Activated CD8-positive, alpha-beta memory T cell treated with anti-CD3 and anti-CD28 coated beads, Interleukin-2, amount 10 ng/mL, durations not matched to agents 7 days and 5 days (primary cell): ENCODE measurements at regions of chr14 and their contacts with region 1.

Region 1: GRCh38 chr14:49862089-49862673 is 9.6 kb upstream of the NEMF start:
- DNase-seq: peak; percentile 93
- ATAC-seq: peak; percentile 10
- H3K4me3 Mint-ChIP-seq: no peak overlapping the region
- H3K27ac Mint-ChIP-seq: no peak overlapping the region
- H3K4me1 Mint-ChIP-seq: peaks cover 32% of the 10 kb centered on the region
- H3K27me3 Mint-ChIP-seq: no peaks in the 10 kb centered on the region

Region 2: DNA sequence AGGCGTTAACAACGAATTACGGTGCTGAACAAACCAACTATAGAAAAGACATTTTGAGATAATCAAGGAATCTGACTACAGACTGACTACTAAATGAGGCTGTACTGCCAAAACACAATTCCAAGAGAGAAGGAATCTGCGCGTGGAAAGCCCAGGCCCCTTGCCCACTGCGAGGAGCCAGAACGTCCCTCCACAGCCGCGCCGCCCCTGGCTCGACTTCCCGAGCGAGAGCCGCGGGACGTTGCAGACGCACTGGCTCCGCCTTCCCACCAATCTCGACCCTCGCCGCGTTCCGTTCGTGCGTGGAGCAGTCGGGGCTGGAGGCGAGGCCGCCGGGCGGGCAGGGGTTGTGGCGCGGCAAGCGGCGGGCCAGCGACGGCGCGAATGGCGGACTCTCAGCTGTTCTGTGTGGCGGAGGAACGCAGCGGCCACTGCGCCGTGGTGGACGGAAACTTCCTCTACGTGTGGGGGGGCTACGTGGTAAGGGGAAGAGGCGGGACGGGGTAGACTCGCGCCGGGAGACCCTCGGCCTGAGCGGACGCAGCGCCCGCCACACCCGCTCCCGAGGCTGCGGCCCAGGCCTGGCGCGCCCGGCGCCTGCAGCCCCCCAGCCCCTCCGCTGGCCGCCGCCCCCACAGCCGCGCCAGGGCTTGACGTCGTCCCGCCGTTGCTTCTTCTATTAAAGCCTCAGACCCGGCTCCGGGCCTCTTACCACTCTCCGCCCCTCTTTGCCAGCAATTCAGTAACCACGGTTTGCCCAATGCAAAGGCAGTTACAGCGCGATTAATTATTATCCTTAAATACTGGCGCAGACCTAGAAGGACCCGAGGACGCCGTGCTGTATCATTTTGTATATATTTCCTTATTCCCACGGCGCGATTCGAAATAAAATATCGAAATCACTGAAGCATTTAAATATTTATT is 169.1 kb before region 1 on chr14 and contains the start of gene KLHDC1:
- CTCF ChIA-PET with region 1: no interaction called
- DNase-seq: peak; percentile 83
- ATAC-seq: peak; percentile 77
- H3K4me3 Mint-ChIP-seq: peak within 1 kb of the TSS; percentile 74
- H3K27ac Mint-ChIP-seq: peak within 1 kb of the TSS; percentile 78
- H3K4me1 Mint-ChIP-seq: peaks cover 22% of the 10 kb centered on the region
- H3K27me3 Mint-ChIP-seq: no peaks in the 10 kb centered on the region
- total RNA-seq, gene KLHDC1: 1.1 to 1.9 TPM

Region 3: DNA sequence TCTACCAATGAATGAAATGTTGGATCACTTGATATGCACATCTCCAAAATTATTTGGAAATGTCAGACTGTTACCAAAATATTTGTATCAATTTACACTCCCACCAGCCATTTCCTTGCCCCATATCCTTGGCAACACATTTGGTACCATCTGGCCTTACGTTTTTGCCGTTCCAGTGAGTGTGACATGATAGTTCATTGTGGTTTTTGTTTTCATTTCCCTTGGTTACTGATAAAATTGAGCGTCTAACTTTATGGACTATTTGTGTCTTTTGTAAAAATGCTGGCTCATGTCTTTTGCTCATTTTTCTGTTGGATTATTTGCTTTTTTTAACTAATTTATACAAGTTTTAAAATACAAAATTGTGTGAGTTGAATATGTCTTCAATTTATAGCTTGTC is 158.2 kb before region 1 on chr14:
- CTCF ChIA-PET with region 1: no interaction called
- DNase-seq: no peak
- ATAC-seq: no peak
- H3K4me3 Mint-ChIP-seq: no peak overlapping the region
- H3K27ac Mint-ChIP-seq: no peak overlapping the region
- H3K4me1 Mint-ChIP-seq: peaks cover 7% of the 10 kb centered on the region
- H3K27me3 Mint-ChIP-seq: no peaks in the 10 kb centered on the region

Region 4: DNA sequence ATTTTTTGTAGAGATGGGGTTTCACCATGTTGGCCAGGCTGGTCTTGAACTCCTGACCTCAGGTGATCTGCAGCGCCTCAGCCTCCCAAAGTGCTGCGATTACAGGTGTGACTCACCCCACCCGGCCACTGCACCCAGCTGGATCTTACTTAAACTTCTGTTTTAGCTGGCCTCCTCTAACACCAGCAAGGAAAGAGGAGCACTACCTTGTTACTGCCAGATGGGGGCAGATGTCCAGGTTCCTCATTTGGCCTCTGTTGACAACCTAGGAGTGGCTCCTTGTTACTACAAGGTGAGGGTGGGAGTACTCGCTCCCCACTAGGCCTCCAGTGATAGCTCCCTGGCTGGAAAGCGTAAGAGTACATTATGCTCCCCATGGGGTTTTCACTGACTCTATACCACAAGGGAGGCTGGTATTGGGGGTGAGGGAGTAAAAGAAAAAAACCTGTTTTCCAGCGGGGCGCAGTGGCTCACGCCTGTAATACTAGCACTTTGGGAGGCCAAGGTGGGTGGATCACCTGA is 17.6 kb after region 1 on chr14:
- CTCF ChIA-PET with region 1: interaction called, 20 read pairs
- DNase-seq: peak; percentile 83
- ATAC-seq: peak; percentile 96
- H3K4me3 Mint-ChIP-seq: no peak overlapping the region
- H3K27ac Mint-ChIP-seq: peak overlapping the region; percentile 52
- H3K4me1 Mint-ChIP-seq: peaks cover 24% of the 10 kb centered on the region
- H3K27me3 Mint-ChIP-seq: no peaks in the 10 kb centered on the region

Region 5: GRCh38 chr14:49892636-49893308 is 30.6 kb after region 1 on chr14 and contains the start of gene ARF6:
- CTCF ChIA-PET with region 1: interaction called, 27 read pairs
- DNase-seq: peak; percentile 99
- ATAC-seq: peak; percentile 91
- H3K4me3 Mint-ChIP-seq: peak within 1 kb of the TSS; percentile 94
- H3K27ac Mint-ChIP-seq: peak within 1 kb of the TSS; percentile 99
- H3K4me1 Mint-ChIP-seq: peaks cover 18% of the 10 kb centered on the region
- H3K27me3 Mint-ChIP-seq: no peaks in the 10 kb centered on the region
- total RNA-seq, gene ARF6: 171 to 190 TPM

Region 6: DNA sequence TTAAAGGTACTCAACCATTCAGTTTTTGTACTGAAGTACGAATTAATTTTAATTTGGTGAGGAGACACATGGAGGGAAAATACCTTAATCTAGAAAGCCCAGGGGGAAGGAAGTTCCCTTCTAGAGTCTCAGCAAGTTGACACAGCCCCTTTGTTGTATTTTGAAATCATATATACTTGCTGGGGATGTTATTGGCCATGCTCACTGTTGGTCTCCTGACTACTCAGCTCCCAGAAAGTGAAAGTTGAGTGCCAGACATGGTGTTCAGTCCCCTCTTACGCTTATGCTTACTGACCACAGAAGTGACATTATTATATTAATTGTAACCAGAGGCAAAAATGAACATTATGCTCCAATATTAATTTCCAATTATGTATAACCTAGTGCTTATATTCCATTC is 58.8 kb after region 1 on chr14:
- CTCF ChIA-PET with region 1: no interaction called
- DNase-seq: no peak
- ATAC-seq: no peak
- H3K4me3 Mint-ChIP-seq: no peak overlapping the region
- H3K27ac Mint-ChIP-seq: no peak overlapping the region
- H3K4me1 Mint-ChIP-seq: peaks cover 7% of the 10 kb centered on the region
- H3K27me3 Mint-ChIP-seq: no peaks in the 10 kb centered on the region

Region 7: DNA sequence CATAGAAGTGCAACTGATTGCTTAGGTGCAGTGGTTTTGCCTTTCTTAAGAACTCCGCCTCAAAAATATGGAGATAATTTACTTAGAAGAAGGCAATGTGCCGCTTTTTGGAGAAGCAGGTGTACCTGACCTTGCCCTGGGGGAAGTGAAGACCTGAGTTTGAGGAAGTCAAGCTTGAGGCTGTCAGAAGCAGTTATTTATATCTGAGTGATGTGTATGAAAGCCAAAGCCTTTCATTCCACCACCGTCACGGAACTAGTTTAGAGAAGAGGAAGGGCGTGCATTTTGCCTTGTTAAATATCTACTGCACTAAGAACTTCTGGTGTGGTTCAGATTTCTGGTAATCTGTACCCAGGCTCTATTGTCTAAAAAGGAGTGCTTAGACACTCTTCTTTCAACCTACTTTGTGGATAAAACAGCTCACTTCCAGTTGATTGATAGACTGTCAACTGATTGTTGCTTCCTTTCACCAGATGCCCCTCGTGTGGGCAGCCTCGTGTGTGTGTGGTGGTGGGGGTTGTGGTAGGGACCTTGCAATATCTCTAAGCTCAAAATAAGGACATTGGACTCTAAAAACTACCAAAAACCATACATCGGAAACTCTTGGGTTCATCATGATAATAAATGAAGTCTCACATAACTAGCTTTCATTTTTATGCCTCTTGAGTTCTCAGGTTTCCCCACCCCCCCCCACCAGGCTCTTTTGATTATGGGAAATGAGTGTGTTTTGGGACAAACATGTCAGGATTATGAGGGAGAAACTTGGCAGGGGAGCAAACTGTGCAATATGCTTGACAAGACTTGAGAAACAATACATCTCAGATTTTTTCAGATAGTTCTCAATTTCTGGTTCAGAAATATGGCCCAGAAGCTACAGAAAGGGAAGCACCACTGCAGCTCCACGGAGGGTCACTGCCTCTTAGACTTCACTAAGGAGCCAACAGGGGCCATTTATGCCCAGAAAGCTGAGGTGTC is 109.3 kb after region 1 on chr14:
- CTCF ChIA-PET with region 1: interaction called, 46 read pairs
- DNase-seq: peak; percentile 87
- ATAC-seq: peak; percentile 66
- H3K4me3 Mint-ChIP-seq: peak overlapping the region; percentile 74
- H3K27ac Mint-ChIP-seq: peak overlapping the region; percentile 99
- H3K4me1 Mint-ChIP-seq: peaks cover 67% of the 10 kb centered on the region
- H3K27me3 Mint-ChIP-seq: no peaks in the 10 kb centered on the region

Region 8: GRCh38 chr14:50038398-50039119 is 176.4 kb after region 1 on chr14:
- CTCF ChIA-PET with region 1: interaction called, 24 read pairs
- DNase-seq: peak; percentile 86
- ATAC-seq: peak; percentile 74
- H3K4me3 Mint-ChIP-seq: peak overlapping the region; percentile 78
- H3K27ac Mint-ChIP-seq: peak overlapping the region; percentile 98
- H3K4me1 Mint-ChIP-seq: peaks cover 78% of the 10 kb centered on the region
- H3K27me3 Mint-ChIP-seq: no peaks in the 10 kb centered on the region

Region 9: DNA sequence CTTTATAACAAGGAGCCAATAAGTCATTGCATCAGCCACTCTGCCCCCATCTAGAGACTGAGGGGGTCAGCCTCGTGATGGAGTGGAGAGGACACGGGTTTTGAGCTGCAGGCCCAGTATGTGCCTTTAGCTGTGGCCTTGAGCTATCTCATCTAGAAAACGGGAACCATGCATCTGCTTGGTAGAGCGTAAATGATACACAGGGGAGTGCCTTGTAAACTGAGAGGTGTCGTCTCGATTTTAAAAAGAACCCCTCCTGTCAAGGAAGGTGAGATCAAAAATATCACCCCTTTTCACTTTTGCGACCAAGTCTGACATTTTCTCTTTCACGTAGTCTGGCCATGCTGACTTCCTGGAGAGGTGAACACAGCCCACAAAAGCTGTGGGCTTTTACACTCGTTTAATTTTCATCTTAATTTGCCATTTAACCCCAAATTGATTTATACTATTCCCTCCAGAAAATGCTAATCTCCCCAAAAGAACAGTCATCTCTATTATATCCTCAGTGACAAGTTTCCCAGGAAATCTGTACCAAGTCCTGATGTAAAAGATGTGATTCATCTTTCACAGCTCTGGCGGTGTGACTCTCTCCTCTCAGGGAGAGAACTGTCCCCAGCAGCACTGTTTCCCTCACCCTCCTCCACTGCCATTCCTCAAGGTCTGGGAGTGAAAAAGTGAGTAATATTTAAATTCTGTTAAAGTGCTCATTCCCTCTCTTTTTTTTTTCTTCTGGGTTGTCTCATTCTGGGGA is 223.6 kb after region 1 on chr14:
- CTCF ChIA-PET with region 1: interaction called, 38 read pairs
- DNase-seq: peak; percentile 56
- ATAC-seq: no peak
- H3K4me3 Mint-ChIP-seq: peak overlapping the region; percentile 52
- H3K27ac Mint-ChIP-seq: peak overlapping the region; percentile 95
- H3K4me1 Mint-ChIP-seq: peaks cover 91% of the 10 kb centered on the region
- H3K27me3 Mint-ChIP-seq: no peaks in the 10 kb centered on the region

Region 10: DNA sequence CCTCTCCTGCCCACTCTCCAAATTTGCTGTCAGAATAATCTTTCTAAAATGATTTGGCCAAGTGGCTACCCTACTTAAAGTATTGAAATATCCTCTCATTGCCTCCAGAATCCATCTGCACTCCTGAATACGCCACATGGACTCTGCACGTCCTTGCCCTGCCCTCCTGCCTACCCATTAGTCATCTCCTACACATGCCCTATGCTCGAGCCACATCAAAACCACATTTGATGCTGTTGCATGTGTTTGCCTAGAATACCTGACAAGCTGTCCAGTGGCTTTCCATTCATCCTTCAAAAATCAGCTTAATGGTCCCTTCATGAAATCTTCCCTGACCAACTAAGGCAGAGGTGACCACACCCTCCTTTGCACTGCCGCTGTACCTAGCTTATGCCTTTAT is 237.2 kb after region 1 on chr14:
- CTCF ChIA-PET with region 1: interaction called, 121 read pairs
- DNase-seq: no peak
- ATAC-seq: no peak
- H3K4me3 Mint-ChIP-seq: no peak overlapping the region
- H3K27ac Mint-ChIP-seq: no peak overlapping the region
- H3K4me1 Mint-ChIP-seq: peaks cover 55% of the 10 kb centered on the region
- H3K27me3 Mint-ChIP-seq: peaks cover 5% of the 10 kb centered on the region